GM10248 (cell line): ENCODE measurements at regions of chr10 and their contacts with region 1.

Region 1: GRCh38 chr10:90787393-90788198 is 70.2 kb downstream of the HTR7 start:
- DNase-seq: no peak
- CTCF ChIP-seq: peak; percentile 70

Region 2: GRCh38 chr10:90751107-90751997 is 36.2 kb before region 1 on chr10:
- CTCF ChIA-PET with region 1: interaction called, 20 read pairs
- POLR2A ChIA-PET with region 1: no interaction called
- DNase-seq: peak; percentile 42
- CTCF ChIP-seq: peak; percentile 56

Region 3: DNA sequence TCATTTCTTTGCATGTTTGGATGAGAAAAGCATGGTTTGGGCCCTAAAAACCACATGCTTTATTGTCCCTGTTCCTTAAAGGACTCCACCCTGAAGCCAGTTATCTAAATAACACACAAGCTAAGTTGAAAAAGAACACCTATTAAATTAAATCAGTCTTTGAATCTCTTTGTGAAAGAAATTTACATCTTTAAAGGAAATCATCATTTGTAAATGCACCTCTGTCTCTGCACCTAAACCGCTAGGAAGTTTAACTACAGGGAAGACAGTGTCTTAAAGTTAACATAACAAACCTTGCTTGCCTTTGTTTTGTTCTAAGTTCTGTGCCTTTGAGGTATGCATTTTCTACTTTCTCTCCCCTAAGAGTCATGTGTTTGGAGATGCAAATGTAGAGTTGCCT is 17.6 kb after region 1 on chr10:
- CTCF ChIA-PET with region 1: interaction called, 21 read pairs
- POLR2A ChIA-PET with region 1: no interaction called
- DNase-seq: no peak
- CTCF ChIP-seq: no peak

Region 4: DNA sequence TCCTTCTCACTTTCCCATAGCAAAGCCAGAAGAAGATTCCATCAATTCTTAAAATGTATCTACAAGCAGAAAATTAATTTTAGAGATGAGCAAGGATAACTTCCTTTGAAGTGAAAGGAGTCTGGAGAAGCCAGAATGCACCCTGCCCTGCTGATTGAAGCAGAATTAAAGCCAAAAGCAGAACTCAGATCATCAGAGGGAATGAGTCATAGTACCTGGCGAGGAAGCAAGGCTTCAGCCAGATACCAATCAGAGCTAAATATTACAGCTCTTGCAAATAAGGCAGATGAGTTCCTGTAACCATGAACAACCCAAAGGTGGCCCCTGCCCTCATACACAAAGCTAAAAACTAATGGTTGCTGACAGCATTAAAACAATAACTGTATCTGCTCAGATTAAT is 59.8 kb after region 1 on chr10:
- CTCF ChIA-PET with region 1: no interaction called
- POLR2A ChIA-PET with region 1: no interaction called
- DNase-seq: no peak
- CTCF ChIP-seq: no peak